Activated CD4-positive, alpha-beta T cell treated with anti-CD3 and anti-CD28 coated beads, Interleukin-2, amount 10 ng/mL, durations not matched to agents 7 days and 5 days (primary cell): ENCODE measurements at regions of chr2 and their contacts with region 1.

Region 1: DNA sequence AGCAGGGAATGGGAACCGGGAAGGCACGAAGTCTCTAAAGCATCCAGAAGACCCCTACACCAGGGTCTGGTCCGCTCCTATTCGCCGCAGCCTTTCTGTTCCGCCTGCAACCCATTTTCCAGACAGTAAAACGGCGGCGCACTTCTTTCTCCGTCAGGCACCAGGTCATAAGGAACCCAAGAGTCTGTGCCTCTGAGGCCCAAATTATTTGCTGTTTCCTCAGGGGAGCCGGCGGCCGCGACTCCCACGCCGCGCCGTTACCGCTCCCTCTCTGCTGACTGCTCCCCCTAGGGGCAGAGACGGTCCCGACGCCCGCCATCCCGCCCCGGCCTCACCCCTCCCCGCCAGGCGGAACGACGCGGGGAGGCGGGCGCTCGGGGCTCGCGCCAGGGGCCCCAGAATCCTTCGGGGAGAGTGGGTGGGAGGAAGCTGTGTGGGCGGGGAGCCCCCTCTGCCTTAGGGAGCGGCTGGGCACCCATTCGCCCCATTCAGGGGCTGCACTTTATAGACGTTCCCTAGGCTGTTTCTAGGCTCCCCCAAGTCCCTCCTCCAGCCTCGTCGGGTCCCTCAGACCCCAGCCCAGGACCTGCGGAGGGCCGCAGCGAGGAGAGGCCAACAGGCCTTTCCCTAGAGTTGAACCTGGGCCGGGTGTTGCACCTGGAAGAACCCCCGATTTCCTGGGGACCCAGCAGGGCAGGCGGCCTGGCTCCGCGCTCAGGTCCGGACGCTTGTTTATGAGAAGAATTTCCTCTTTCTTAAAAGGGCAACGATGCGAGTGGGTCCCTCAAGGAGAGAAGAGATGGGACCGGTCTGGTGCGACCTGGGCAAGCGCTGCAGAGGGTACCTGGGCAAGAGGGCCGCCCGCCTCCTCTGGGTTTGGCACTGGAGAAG is 3.6 kb upstream of the CTDSP1 start:
- DNase-seq: peak; percentile 95
- H3K4me3 Mint-ChIP-seq: peak overlapping the region; percentile 83
- H3K27ac Mint-ChIP-seq: peak overlapping the region; percentile 97
- H3K4me1 Mint-ChIP-seq: peaks cover 34% of the 10 kb centered on the region
- H3K27me3 Mint-ChIP-seq: no peaks in the 10 kb centered on the region

Region 2: DNA sequence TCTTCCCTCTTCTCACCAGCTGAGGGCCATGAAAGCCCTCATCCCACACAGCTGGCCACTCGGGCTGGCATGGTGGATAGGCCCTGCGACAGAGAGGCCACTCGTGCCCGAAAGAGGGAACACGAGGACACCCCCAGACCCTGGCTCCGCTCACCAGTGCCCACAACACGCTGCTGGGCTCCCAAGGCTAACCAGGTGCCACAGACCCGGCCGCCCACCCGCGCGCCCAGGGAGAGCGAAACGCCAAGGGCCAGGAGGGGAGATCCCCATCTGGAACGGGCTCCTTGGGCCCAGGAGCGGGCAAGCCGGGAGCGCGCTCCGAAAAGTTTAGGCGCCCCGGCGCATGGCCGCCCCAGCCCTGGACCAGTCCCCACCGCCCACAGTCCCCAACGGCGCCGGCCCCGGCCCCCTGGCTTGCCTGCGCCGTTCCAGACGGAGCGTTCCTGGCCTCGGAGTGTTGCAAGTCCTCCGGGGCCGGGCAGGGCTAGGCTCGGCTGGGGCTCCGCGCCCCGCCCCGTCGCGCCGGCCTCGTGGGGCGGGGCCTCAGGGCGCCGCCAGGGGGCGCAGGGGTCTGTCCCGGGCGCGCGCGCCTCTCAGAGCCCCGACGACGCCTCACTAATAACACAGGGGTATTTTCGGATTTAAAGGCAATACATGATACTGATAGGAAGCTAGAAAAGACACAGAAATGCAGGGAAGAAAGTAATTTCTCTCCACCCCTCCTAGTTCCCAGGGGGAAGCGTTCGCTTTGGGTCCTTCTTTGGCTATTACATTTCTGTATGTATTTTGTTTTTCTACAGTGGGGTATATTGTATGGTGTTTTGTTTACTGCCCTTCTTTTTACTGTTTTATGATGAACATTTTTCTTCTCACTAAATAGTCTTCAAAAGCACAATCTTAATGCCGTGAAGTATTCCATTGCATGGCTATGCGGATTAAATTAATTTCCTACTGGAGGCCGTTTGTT is 103.7 kb before region 1 on chr2 and contains the start of gene TMBIM1:
- CTCF ChIA-PET with region 1: interaction called, 12 read pairs
- POLR2A ChIA-PET with region 1: no interaction called
- DNase-seq: peak; percentile 78
- H3K4me3 Mint-ChIP-seq: peak within 1 kb of the TSS; percentile 92
- H3K27ac Mint-ChIP-seq: peak within 1 kb of the TSS; percentile 88
- H3K4me1 Mint-ChIP-seq: peaks cover 60% of the 10 kb centered on the region
- H3K27me3 Mint-ChIP-seq: no peaks in the 10 kb centered on the region
- total RNA-seq, gene TMBIM1: 99.3 to 101 TPM

Region 3: GRCh38 chr2:218301176-218301819 is 94.7 kb before region 1 on chr2:
- CTCF ChIA-PET with region 1: interaction called, 14 read pairs
- POLR2A ChIA-PET with region 1: interaction called, 3 read pairs
- DNase-seq: peak; percentile 95
- H3K4me3 Mint-ChIP-seq: no peak overlapping the region
- H3K27ac Mint-ChIP-seq: peak overlapping the region; percentile 60
- H3K4me1 Mint-ChIP-seq: peaks cover 13% of the 10 kb centered on the region
- H3K27me3 Mint-ChIP-seq: peaks cover 2% of the 10 kb centered on the region

Region 4: DNA sequence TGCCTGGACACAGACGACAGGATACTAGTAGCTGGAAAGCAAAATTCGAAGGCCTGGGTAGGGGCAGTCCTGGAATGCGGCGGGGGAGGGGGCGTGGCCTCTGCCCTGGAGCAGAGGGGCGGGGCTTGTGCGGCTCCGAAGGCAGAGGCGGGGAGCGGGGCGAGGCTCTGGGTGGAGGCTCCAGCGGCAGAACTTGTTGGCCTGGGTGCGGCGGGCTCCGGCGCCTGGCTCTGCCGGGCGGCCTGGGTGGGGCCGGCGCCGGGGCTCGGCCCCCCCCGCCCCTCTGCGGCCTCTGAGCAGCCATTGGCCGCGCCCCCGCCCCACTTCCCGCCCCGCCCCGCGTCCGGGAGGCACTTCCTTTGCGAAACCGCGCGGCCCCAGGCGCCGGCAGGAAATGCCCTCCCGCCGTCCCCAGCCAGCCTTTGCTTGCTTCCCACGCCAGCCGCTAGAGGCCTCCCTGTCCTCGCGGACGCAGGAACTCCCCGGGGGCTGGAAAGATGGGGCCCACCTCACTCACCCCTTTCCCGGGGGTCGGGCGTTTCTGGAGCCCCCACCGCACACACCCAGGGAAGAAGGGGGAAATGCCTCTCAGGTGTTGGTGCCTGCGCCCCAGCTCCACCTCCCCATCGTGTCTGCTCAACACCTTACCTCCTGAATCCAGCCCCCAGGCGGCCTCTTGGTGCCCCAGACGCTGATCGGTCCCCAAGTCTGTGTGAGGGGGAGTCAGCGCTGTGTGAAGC is 10.3 kb after region 1 on chr2:
- CTCF ChIA-PET with region 1: interaction called, 39 read pairs
- POLR2A ChIA-PET with region 1: no interaction called
- DNase-seq: peak; percentile 95
- H3K4me3 Mint-ChIP-seq: peak overlapping the region; percentile 62
- H3K27ac Mint-ChIP-seq: peak overlapping the region; percentile 89
- H3K4me1 Mint-ChIP-seq: peaks cover 60% of the 10 kb centered on the region
- H3K27me3 Mint-ChIP-seq: no peaks in the 10 kb centered on the region